ENCODE measurements at regions of chr16 and their contacts with region 1.

Region 1: GRCh38 chr16:66344533-66345145 is 21.9 kb upstream of the CDH5 start:
- DNase-seq: no peak
- H3K4me3 ChIP-seq: no peak overlapping the region
- H3K27me3 ChIP-seq: peaks cover 11% of the 10 kb centered on the region
- CTCF ChIP-seq: peak; percentile 62

Region 2: GRCh38 chr16:66275775-66276428 is 68.7 kb before region 1 on chr16:
- CTCF ChIA-PET with region 1: interaction called, 17 read pairs
- POLR2A ChIA-PET with region 1: no interaction called
- DNase-seq: no peak
- H3K4me3 ChIP-seq: no peak overlapping the region
- H3K27me3 ChIP-seq: peaks cover 2% of the 10 kb centered on the region
- CTCF ChIP-seq: peak; percentile 76

Region 3: GRCh38 chr16:66315210-66315825 is 29.3 kb before region 1 on chr16:
- CTCF ChIA-PET with region 1: interaction called, 17 read pairs
- POLR2A ChIA-PET with region 1: no interaction called
- DNase-seq: peak; percentile 5
- H3K4me3 ChIP-seq: no peak overlapping the region
- H3K27me3 ChIP-seq: peaks cover 5% of the 10 kb centered on the region
- CTCF ChIP-seq: peak; percentile 99

Region 4: DNA sequence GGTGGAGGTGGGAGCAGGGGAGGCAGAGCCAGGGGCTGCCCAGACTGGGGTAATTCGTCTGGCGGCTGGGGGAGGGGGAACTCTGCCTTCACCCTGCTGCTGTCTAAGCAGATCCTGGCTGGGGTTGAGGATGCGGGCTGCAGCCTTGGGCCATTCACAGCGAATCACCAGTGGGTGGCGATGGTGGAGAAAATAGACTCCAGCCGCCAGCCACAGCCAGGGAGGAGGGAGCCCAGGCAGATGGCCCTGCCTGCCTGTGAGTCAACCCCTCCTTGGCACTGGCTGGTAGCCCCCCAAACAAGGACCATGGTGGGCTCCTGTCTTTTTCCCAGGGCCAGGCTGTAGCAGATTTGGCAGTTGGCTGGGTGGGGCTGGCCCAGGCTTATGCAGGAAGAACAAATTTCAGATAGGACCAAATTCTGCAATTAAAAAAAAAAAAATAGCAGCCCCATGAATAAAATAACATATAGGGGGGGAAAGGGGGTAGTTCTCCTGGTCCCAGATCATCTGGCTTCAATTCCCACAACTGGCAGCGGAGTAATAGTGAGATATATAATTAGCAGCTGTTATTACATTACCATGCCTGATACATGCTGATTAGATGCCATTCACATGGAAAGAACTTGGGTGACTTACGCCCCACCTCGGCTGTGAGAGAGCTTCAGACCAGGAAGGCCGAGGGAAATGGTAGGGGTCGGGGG is 19.7 kb before region 1 on chr16:
- CTCF ChIA-PET with region 1: interaction called, 23 read pairs
- POLR2A ChIA-PET with region 1: no interaction called
- DNase-seq: no peak
- H3K4me3 ChIP-seq: no peak overlapping the region
- H3K27me3 ChIP-seq: peaks cover 15% of the 10 kb centered on the region
- CTCF ChIP-seq: no peak

Region 5: DNA sequence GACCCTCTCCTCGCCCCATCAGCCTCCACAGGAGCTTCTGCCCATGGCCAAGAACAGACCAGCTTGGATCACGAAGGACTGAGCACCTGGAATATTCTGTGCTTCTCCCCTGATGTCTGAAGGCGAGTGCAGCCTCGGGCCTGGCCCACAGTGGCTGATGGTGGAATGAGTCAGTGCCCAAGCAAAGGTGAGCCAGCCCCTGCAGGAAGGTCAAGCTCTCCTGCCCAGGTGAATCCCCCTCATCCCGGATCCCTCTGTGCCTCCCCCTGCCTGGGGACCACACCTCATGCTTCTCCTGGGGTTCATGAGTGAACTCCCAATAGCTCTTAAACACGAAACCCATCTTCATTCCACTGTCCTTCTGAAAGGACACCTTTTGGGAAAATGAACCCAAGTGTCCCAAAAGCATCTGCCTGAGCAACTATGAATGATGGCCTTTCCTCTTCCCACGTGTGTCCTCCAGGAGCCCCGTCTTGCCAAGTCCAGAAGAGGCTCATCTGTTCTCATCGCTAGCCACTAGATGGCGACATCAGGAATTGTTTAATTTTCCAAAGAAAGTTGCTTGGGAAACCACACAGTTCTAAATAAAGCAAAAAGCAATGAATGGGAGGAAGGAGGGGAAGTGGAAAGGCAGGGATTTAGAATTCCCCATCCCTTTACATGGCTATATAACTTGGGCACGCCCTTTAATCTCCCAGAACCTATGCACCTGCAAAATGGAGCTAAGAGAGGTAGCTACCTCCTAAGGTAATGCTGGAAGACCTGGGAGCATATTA is 12.7 kb after region 1 on chr16:
- CTCF ChIA-PET with region 1: interaction called, 132 read pairs
- POLR2A ChIA-PET with region 1: no interaction called
- DNase-seq: peak; percentile 55
- H3K4me3 ChIP-seq: no peak overlapping the region
- H3K27me3 ChIP-seq: peaks cover 17% of the 10 kb centered on the region
- CTCF ChIP-seq: peak; percentile 77

Region 6: DNA sequence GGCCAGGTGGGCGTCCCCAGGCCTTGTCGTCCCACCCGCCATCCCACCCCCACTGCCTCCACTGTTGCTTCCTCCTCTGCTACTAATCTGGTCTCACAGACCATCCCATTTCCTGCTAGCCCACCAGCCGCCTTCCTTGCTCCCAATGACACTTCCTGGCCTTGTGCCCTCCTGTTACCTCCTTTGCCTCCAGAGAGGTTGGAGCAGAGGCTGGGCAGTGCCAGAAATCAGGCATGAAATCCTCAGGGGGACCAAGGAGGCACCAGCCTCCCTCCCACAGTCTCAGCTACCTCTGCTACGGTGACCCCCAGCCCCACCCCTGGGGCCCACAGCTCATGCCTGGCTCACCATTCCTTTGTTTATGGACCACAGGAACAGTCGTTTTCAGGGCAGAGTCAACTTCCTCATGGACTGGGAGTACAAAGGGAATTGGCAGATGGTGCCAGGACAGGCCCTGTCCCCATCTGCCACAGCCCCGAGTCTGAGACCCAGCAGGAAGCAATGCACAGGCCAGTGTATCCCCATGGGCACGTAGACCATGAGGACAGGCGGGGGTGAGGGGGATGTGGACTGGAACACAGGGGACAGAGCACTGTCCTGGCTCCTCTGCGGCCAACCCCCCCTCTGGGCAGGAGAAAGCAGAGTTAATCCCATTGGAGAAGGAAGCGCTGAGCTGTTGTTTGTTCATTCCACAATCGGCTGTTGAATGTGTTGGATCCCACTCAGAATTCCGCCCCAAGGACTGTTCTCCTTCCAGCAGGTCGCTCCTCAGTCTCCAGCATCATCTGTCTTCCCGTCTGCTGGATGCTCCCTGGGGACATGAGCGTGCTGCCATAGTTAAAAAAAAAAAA is 19.7 kb after region 1 on chr16:
- CTCF ChIA-PET with region 1: interaction called, 132 read pairs
- POLR2A ChIA-PET with region 1: no interaction called
- DNase-seq: no peak
- H3K4me3 ChIP-seq: no peak overlapping the region
- H3K27me3 ChIP-seq: peaks cover 20% of the 10 kb centered on the region
- CTCF ChIP-seq: no peak

Region 7: DNA sequence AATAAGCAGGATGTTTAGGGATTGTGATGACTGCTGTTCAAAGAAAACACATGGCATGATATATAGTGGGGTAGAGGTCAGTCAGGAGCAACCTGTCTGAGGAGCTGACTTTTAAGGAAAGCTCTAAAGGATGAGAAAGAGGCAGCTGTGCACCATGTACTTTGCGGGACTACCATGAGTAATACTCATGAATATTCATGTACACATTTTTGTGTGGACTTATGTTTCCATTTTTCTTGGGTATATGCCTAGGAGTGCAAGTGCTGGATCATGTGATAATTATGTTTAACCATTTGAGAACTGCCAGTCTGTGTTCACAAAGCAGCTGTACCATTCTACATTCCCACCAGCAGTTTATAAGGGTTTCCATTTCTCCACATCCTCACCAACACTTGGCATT is 118.3 kb after region 1 on chr16:
- CTCF ChIA-PET with region 1: no interaction called
- POLR2A ChIA-PET with region 1: no interaction called
- DNase-seq: no peak
- H3K4me3 ChIP-seq: no peak overlapping the region
- H3K27me3 ChIP-seq: peaks cover 12% of the 10 kb centered on the region
- CTCF ChIP-seq: no peak